Calu3 (cell line): ENCODE measurements at regions of chr20 and their contacts with region 1.

Region 1: GRCh38 chr20:58980700-58981627 is at the start of gene NELFCD:
- DNase-seq: peak; percentile 99
- H3K4me3 Mint-ChIP-seq: peak within 1 kb of the TSS; percentile 67
- H3K27ac Mint-ChIP-seq: peak within 1 kb of the TSS; percentile 67
- H3K4me1 Mint-ChIP-seq: peaks cover 27% of the 10 kb centered on the region
- H3K27me3 Mint-ChIP-seq: no peaks in the 10 kb centered on the region
- CTCF ChIP-seq: no peak
- total RNA-seq, gene NELFCD: 179 and 181 TPM in 2 replicates

Region 2: GRCh38 chr20:58890518-58891085 is 90.4 kb before region 1 on chr20:
- CTCF ChIA-PET with region 1: no interaction called
- intact Hi-C with region 1: loop called (anchors 5 kb)
- DNase-seq: peak; percentile 83
- H3K4me3 Mint-ChIP-seq: peak overlapping the region; percentile 73
- H3K27ac Mint-ChIP-seq: peak overlapping the region; percentile 91
- H3K4me1 Mint-ChIP-seq: peaks cover 24% of the 10 kb centered on the region
- H3K27me3 Mint-ChIP-seq: no peaks in the 10 kb centered on the region
- CTCF ChIP-seq: no peak

Region 3: DNA sequence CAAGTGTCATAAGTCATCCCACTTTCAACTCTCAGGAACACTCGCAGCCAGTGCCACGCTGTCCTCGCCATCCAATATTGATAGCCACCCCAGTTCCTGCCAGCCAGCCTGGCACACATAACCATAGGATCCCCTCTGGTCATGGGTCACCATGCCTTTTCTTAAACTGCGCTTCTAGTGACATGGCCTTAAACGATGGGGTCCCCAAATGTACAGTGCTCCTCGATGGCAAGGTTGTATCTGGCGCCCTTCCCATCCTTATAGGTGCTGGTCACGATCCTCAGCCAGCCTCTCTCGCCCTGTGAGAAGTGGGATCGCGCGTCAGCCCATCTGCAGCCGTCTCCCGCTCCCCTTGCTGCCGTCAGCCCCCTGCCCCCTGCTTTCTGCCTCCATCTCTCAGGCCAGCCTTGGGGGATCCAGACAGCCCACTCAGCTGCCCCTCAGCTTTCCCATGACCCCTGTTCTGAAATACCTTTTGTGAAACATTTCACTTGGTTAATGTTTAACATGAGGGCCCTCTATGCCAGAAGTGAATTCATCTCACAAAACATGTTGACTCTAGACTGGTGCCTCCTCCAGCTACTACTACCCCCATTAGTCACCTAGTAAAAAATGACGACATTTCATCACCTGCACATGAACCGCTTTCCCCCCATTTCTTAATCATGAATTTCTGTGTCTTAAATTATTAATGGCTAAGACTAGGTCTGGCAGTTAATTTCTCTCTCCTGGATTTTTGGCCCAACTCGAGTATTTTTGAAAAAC is 14.7 kb after region 1 on chr20:
- CTCF ChIA-PET with region 1: interaction called, 11 read pairs
- intact Hi-C with region 1: no loop called
- DNase-seq: peak; percentile 24
- H3K4me3 Mint-ChIP-seq: peak overlapping the region; percentile 0
- H3K27ac Mint-ChIP-seq: peak overlapping the region; percentile 56
- H3K4me1 Mint-ChIP-seq: peaks cover 17% of the 10 kb centered on the region
- H3K27me3 Mint-ChIP-seq: no peaks in the 10 kb centered on the region
- CTCF ChIP-seq: no peak

Region 4: GRCh38 chr20:59032023-59032712 is 51.2 kb after region 1 on chr20 and contains the start of gene ATP5F1E:
- CTCF ChIA-PET with region 1: no interaction called
- intact Hi-C with region 1: loop called (anchors 5 kb)
- DNase-seq: peak; percentile 100
- H3K4me3 Mint-ChIP-seq: peak within 1 kb of the TSS; percentile 95
- H3K27ac Mint-ChIP-seq: peak within 1 kb of the TSS; percentile 91
- H3K4me1 Mint-ChIP-seq: peaks cover 50% of the 10 kb centered on the region
- H3K27me3 Mint-ChIP-seq: no peaks in the 10 kb centered on the region
- CTCF ChIP-seq: no peak
- total RNA-seq, gene ATP5F1E: 108 and 116 TPM in 2 replicates